Right ventricle myocardium inferior (tissue), 1 donor: ENCODE measurements at regions of chr4 and their contacts with region 1.

Region 1: DNA sequence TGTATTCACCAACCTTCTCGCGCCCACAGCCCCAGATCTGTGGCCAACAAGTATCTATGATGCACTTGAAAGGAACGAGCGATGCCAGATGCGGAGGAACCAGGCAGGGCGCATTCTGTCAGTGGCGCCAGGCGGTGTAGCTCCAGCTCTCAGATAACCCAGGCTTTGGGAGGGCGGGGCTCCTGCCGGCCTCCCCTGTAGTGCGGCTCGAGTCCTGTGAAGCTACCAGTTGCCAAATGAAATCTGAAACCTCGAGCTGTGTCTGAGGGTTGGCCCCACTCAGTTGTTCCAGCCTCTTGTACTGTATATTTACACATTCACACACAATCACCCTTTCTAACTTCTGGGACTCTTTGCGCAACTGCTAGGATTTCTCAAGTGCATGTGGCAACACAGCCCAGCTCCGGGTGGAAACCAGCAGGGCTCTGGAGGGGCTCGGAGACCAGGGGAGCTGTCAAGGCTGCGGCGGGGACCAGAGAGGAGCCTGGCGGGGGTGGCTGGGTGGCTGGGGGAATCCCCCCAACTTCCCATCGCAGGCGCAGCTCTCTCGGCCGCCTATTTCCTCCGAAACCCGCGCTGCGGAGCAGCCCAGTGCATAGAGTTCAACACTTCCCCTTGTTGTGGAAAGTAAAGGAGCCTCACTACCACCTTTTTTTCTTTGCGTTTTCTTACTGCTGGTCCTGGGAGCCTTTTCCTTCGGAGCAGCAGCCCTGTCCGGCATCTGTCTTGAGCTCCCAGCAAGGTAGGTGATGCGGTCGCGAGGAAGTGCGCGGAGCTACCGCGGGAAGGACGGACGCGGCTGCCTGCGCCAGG is at the start of gene ARHGAP24:
- DNase-seq: peak; percentile 92
- ATAC-seq: peak; percentile 98
- total RNA-seq, gene ARHGAP24: 10.6 TPM

Region 2: GRCh38 chr4:85531560-85532341 is 56.7 kb after region 1 on chr4:
- intact Hi-C with region 1: no loop called
- DNase-seq: no peak
- ATAC-seq: no peak

Region 3: DNA sequence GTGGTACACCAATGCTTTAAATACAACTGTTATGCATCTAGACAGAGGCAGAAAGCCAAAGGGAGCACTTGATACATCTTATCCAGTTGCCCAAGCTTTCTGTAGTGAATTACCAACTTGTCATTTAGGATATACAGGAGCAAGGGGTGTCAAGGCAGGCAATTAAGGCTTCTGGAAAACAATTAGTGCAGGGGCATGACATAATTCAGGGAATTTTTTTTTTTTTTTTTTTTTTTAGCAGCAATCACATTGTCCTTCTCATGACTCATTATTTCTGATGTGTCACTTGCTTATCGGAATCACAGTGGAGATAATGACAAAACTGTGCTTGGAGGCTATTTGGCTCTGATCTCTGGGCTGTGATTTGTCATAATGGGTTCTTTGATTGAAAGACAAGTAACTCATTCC is 259.4 kb after region 1 on chr4:
- intact Hi-C with region 1: loop called (anchors 5 kb)
- DNase-seq: no peak
- ATAC-seq: peak; percentile 59